ENCODE measurements at regions of chr21 and their contacts with region 1.

Region 1: DNA sequence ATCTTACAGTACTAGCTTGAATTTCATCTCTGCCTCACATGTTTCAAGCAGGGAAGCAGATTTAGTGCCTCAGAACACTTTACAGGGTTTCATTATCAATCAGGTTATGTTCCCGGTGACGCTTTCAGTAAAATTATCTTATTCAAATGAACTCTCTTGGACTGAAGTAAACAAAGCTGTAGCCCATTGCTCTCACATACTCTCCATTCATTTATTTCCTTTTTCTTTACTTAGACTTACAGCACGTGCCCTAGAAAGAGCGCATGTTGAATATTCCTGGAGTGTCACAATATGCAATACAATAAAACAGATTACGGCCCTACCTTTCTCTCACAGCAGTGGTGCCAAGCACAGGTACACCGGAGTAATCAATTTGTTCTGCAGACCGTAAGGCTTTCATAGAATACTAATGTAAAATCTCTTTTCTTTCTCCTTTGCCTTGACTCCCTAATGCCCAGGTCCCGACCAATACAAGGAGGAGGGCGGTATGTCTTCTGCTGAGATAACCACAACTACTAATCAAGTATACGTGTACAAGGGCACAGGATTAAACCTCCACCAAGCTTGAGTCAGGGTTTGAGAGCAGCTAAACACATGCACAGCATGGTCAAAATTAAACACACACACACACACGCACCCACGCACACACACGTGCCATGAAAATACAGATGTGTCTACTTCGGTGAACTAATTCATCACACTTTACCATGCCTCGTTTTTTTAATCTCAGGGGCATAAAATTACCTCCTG is 62.8 kb downstream of the NRIP1 start:
- DNase-seq: no peak
- H3K4me3 Mint-ChIP-seq: no peak overlapping the region
- H3K27ac Mint-ChIP-seq: no peak overlapping the region
- H3K4me1 Mint-ChIP-seq: peaks cover 40% of the 10 kb centered on the region
- H3K27me3 Mint-ChIP-seq: no peaks in the 10 kb centered on the region

Region 2: GRCh38 chr21:15058854-15059263 is 56.8 kb after region 1 on chr21:
- CTCF ChIA-PET with region 1: no interaction called
- POLR2A ChIA-PET with region 1: no interaction called
- intact Hi-C with region 1: loop called (anchors 5 kb)
- DNase-seq: no peak
- H3K4me3 Mint-ChIP-seq: peak overlapping the region; percentile 44
- H3K27ac Mint-ChIP-seq: no peak overlapping the region
- H3K4me1 Mint-ChIP-seq: peaks cover 72% of the 10 kb centered on the region
- H3K27me3 Mint-ChIP-seq: peaks cover 9% of the 10 kb centered on the region

Measured in activated CD4-positive, alpha-beta memory T cell treated with anti-CD3 and anti-CD28 coated beads for 36 hours (primary cell).